K562 (cell line): ENCODE measurements at regions of chr1 and their contacts with region 1.

Region 1: GRCh38 chr1:158686111-158687009 is at the start of gene SPTA1:
- DNase-seq: peak; percentile 61 to 92 (median 70)
- ATAC-seq: peak; percentile 83
- H3K4me3 ChIP-seq: peak within 1 kb of the TSS; percentile 47
- H3K27ac ChIP-seq: peak within 1 kb of the TSS; percentile 82
- H3K4me1 ChIP-seq: peaks cover 0 to 18% of the 10 kb centered on the region in 2 experiments; a peak in 2 of 5 replicates
- H3K27me3 ChIP-seq: no peaks in the 10 kb centered on the region
- CTCF ChIP-seq: no peak
- EP300 ChIP-seq: peak; percentile 92
- POLR2A ChIP-seq: peak; percentile 77
- RAD21 ChIP-seq: 0 out of 4 replicates have a peak, but pooled peaks of 1 of the 2 experiments have one; percentile 4
- polyA plus RNA-seq, gene SPTA1: 11.0 to 21.6 TPM

Region 2: GRCh38 chr1:158638146-158638545 is 48.2 kb before region 1 on chr1:
- CTCF ChIA-PET with region 1: no interaction called
- POLR2A ChIA-PET with region 1: no interaction called
- in situ Hi-C with region 1: no loop called
- intact Hi-C with region 1: no loop called
- DNase-seq: no peak
- ATAC-seq: no peak
- H3K4me3 ChIP-seq: no peak overlapping the region
- H3K27ac ChIP-seq: no peak overlapping the region
- H3K4me1 ChIP-seq: no peaks in the 10 kb centered on the region
- H3K27me3 ChIP-seq: no peaks in the 10 kb centered on the region
- CTCF ChIP-seq: no peak
- EP300 ChIP-seq: no peak
- POLR2A ChIP-seq: no peak
- RAD21 ChIP-seq: no peak

Region 3: DNA sequence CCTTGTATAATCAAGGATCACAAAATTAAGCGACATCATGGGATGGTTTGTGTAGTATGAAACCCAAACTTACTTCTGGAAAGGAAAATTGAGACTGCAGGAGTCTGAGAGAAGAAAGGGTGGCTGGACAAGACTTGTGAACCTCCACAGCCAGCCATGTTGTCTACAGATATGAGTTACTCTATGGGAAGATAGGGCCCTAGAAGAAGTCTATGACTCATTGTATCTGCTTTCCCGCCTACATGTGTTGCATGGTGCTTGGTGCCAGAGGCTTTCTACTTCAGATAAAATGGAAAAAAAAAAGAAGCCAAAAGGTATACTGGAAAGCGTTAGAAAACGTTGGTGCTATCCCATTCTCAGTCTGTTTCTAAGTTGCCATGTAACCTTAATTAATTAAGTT is 113.3 kb after region 1 on chr1:
- CTCF ChIA-PET with region 1: no interaction called
- POLR2A ChIA-PET with region 1: no interaction called
- in situ Hi-C with region 1: no loop called
- intact Hi-C with region 1: loop called (anchors 5 kb)
- DNase-seq: peak; percentile 39 to 77 (median 58)
- ATAC-seq: peak; percentile 90
- H3K4me3 ChIP-seq: no peak overlapping the region
- H3K27ac ChIP-seq: peak overlapping the region; percentile 71
- H3K4me1 ChIP-seq: peaks cover 0 to 15% of the 10 kb centered on the region in 2 experiments; a peak in 2 of 5 replicates
- H3K27me3 ChIP-seq: no peaks in the 10 kb centered on the region
- CTCF ChIP-seq: no peak
- EP300 ChIP-seq: peak; percentile 39; the same call in 1 of the 2 replicates
- POLR2A ChIP-seq: no peak
- RAD21 ChIP-seq: no peak

Region 4: DNA sequence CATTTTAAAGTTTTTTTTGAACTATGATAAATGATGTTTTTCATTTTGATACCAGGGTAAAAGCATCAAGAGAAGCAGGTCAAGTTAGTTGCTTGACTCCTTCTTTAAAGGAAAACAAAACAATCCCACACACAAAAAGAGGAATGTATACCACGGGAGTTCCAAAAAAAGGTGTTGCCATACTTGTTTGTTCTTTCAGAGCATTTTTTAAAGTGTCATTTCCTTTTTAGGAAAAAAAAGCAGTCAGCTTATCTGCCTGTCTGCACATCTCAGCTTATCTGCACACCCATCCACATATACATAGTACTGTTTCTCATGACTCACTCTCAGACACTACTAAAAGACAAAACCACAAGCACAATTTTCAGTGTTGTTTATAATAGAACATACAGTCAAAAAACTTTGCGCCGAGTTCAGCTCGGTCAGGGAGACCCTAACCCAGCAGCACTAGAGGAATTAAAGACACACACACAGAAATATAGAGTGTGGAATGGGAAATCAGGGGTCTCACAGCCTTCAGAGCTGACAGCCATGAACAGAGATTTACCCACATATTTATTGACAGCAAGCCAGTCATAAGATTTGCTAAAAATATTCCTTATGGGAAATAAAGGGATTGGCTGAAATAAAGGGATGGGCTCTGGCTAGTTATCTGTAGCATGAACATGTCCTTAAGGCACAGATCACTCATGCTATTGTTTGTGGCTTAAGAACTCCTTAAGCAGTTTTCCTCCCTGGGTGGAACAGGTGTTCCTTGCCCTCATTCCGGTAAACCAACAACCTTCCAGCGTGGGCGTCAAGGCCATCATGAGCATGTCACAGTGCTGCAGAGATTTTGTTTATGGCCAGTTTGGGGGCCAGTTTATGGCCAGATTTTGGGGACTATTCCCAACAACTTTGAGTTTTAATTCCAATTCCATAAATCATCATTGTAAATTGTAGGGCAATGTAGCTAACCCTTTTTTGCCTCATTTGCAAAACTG is 133.4 kb after region 1 on chr1:
- CTCF ChIA-PET with region 1: no interaction called
- POLR2A ChIA-PET with region 1: interaction called, 3 read pairs
- in situ Hi-C with region 1: no loop called
- intact Hi-C with region 1: loop called (anchors 5 kb)
- DNase-seq: peak; percentile 25 to 79 (median 50)
- ATAC-seq: peak; percentile 92
- H3K4me3 ChIP-seq: no peak overlapping the region
- H3K27ac ChIP-seq: peak overlapping the region; percentile 88
- H3K4me1 ChIP-seq: peaks cover 0 to 33% of the 10 kb centered on the region in 2 experiments; a peak in 3 of 5 replicates
- H3K27me3 ChIP-seq: no peaks in the 10 kb centered on the region
- CTCF ChIP-seq: no peak
- EP300 ChIP-seq: peak; percentile 97
- POLR2A ChIP-seq: no peak
- RAD21 ChIP-seq: peak in 1 of 2 experiments; percentile 28; a peak in 1 of 4 replicates

Region 5: DNA sequence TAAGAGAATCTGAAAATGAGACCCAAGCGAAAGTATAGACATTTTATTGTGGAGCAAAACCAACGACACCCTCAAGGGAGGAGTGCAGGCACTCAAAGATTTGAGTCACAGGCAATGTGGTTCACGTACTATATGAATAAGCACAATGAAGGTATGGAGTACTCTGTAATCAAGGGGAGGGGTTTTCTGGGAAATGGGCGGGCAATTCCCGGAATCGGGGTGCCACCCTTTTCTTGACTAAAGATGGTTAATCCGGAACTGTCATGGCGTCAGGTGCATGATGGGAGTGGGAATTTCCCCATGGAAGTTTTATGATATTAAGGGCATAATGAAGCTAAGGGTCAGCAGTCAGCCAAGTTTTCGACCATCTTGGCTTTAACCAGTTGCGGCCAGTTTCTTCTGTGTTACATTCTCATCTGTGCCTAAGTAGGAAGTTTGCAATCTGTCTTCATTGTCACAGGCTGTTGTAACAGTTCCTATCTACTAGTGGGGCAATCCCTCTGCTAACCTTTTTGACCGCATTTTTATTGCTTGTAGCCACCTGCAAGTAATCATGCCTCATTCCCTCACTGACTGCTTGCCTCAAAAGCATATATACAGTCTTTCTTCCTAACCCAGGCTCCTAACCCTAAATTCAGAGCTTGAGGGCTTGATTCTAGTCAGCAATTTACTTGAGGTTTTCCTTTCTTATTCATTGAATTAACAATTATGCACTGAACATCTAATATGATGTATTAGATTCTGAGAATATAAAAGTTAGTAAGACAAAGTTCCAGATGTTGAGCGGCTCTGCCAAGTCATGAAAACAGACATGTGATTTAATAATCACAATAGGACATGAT is 391.0 kb after region 1 on chr1:
- CTCF ChIA-PET with region 1: interaction called, 3 read pairs
- POLR2A ChIA-PET with region 1: no interaction called
- in situ Hi-C with region 1: no loop called
- intact Hi-C with region 1: loop called (anchors 5 kb)
- DNase-seq: peak; percentile 75 to 93 (median 79)
- ATAC-seq: peak; percentile 97
- H3K4me3 ChIP-seq: no peak overlapping the region
- H3K27ac ChIP-seq: peak overlapping the region; percentile 93
- H3K4me1 ChIP-seq: peaks cover 0 to 19% of the 10 kb centered on the region in 2 experiments; a peak in 4 of 5 replicates
- H3K27me3 ChIP-seq: no peaks in the 10 kb centered on the region
- CTCF ChIP-seq: no peak
- EP300 ChIP-seq: 0 out of 2 replicates have a peak, but pooled peaks have one; percentile 12
- POLR2A ChIP-seq: peak; percentile 78
- RAD21 ChIP-seq: no peak